MCF 10A (cell line): ENCODE measurements at regions of chr14 and their contacts with region 1.

Region 1: DNA sequence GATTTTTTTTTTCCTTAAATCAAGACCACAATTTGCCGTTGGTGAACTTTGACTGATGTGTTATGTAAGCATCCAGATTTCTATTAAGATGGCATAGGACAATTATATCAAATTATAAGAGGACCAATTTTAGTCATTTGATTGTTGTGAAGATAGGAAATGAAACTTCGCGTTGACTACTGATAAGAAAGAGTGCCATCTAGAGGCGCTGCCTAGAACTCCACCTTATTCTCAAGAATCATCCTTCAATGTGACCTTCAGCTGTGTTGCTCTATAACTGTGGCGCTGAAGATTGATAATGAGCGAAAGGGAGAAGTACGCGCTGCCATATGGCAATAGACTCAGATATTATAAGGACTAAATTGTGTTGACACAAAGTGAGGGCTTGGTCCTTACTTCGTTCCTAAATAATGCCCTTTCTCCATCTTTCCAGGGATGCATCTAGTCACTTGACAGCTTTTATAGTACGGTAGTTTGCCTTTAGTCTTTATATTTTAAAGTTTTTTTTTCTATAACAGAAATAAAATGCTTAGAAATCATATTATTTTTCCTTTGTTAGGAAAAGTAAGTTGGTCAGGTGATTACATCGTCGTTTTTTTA is 350.8 kb upstream of the STXBP6 start:
- DNase-seq: peak; percentile 1
- H3K4me3 Mint-ChIP-seq: no peak overlapping the region
- H3K27ac Mint-ChIP-seq: no peak overlapping the region
- H3K4me1 Mint-ChIP-seq: no peaks in the 10 kb centered on the region
- H3K27me3 Mint-ChIP-seq: peaks cover 19% of the 10 kb centered on the region
- CTCF ChIP-seq: peak; percentile 72

Region 2: GRCh38 chr14:24734878-24735500 is 665.7 kb before region 1 on chr14:
- CTCF ChIA-PET with region 1: interaction called, 4 read pairs
- POLR2A ChIA-PET with region 1: no interaction called
- intact Hi-C with region 1: loop called (anchors 1 kb)
- DNase-seq: peak; percentile 17
- H3K4me3 Mint-ChIP-seq: no peak overlapping the region
- H3K27ac Mint-ChIP-seq: no peak overlapping the region
- H3K4me1 Mint-ChIP-seq: no peaks in the 10 kb centered on the region
- H3K27me3 Mint-ChIP-seq: no peaks in the 10 kb centered on the region
- CTCF ChIP-seq: peak; percentile 55

Region 3: DNA sequence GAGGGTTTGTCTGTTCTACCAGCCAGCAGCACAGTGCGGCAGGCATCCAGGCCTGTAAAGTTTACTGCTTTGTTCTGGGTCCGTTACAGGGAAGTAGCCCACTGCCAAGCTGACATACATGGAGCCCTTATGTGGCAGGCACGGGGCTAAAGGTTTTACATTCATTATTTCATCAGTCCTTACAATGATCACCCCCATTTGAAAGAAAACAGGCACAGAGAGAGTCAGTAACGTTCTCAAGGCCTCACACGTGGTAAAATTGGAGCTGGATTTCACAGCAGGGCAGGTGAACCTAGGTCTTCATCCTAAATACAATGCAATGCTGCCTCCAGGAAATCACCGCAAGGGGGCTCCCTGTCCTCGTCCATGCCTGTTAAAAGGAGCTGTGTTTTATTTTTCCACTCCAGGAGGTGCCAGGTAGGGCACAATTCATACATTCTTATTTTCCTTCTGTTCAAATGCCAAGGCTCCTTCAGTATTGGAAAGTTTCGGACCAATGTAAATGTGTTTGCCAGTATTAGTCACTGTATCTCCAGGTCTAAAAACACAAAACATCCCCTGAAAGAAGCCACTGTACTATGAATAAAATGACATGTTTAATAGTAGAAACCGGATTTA is 594.5 kb before region 1 on chr14:
- CTCF ChIA-PET with region 1: interaction called, 3 read pairs
- POLR2A ChIA-PET with region 1: no interaction called
- intact Hi-C with region 1: loop called (anchors 1 kb)
- DNase-seq: no peak
- H3K4me3 Mint-ChIP-seq: no peak overlapping the region
- H3K27ac Mint-ChIP-seq: no peak overlapping the region
- H3K4me1 Mint-ChIP-seq: no peaks in the 10 kb centered on the region
- H3K27me3 Mint-ChIP-seq: no peaks in the 10 kb centered on the region
- CTCF ChIP-seq: peak; percentile 69

Region 4: DNA sequence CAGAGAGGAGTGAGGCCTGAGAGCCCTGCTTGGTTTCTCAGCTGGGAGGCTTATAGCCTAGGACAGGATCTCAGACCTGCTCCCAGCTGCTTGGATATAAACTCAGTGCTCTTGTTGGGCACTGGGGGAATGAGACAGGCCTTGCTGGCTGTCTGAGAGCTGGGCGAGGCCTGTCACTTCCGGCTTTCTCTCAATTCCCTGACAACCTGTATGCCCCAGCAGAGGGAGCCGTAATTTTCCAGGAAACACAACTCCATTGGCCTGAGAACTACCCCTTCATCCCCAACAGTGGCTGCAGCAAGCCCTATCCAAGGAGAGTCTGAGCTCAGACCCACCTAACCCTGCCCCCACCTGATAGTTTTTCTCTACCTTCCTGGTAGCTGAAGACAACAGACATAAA is 92.5 kb before region 1 on chr14:
- CTCF ChIA-PET with region 1: no interaction called
- POLR2A ChIA-PET with region 1: no interaction called
- intact Hi-C with region 1: no loop called
- DNase-seq: no peak
- H3K4me3 Mint-ChIP-seq: no peak overlapping the region
- H3K27ac Mint-ChIP-seq: no peak overlapping the region
- H3K4me1 Mint-ChIP-seq: no peaks in the 10 kb centered on the region
- H3K27me3 Mint-ChIP-seq: no peaks in the 10 kb centered on the region
- CTCF ChIP-seq: no peak

Region 5: GRCh38 chr14:25389948-25390347 is 10.8 kb before region 1 on chr14:
- CTCF ChIA-PET with region 1: interaction called, 11 read pairs
- POLR2A ChIA-PET with region 1: no interaction called
- intact Hi-C with region 1: no loop called
- DNase-seq: no peak
- H3K4me3 Mint-ChIP-seq: no peak overlapping the region
- H3K27ac Mint-ChIP-seq: no peak overlapping the region
- H3K4me1 Mint-ChIP-seq: no peaks in the 10 kb centered on the region
- H3K27me3 Mint-ChIP-seq: no peaks in the 10 kb centered on the region
- CTCF ChIP-seq: no peak

Region 6: GRCh38 chr14:25411781-25412757 is 11.4 kb after region 1 on chr14:
- CTCF ChIA-PET with region 1: interaction called, 50 read pairs
- POLR2A ChIA-PET with region 1: no interaction called
- intact Hi-C with region 1: no loop called
- DNase-seq: no peak
- H3K4me3 Mint-ChIP-seq: no peak overlapping the region
- H3K27ac Mint-ChIP-seq: no peak overlapping the region
- H3K4me1 Mint-ChIP-seq: no peaks in the 10 kb centered on the region
- H3K27me3 Mint-ChIP-seq: peaks cover 10% of the 10 kb centered on the region
- CTCF ChIP-seq: peak; percentile 16

Region 7: GRCh38 chr14:25463475-25463874 is 62.8 kb after region 1 on chr14:
- CTCF ChIA-PET with region 1: no interaction called
- POLR2A ChIA-PET with region 1: no interaction called
- intact Hi-C with region 1: no loop called
- DNase-seq: no peak
- H3K4me3 Mint-ChIP-seq: no peak overlapping the region
- H3K27ac Mint-ChIP-seq: no peak overlapping the region
- H3K4me1 Mint-ChIP-seq: no peaks in the 10 kb centered on the region
- H3K27me3 Mint-ChIP-seq: no peaks in the 10 kb centered on the region
- CTCF ChIP-seq: no peak